MCF 10A (cell line): ENCODE measurements at regions of chr1 and their contacts with region 1.

Region 1: GRCh38 chr1:205061665-205062069 is 18.7 kb downstream of the CNTN2 start:
- DNase-seq: peak; percentile 85
- H3K4me3 Mint-ChIP-seq: no peak overlapping the region
- H3K27ac Mint-ChIP-seq: no peak overlapping the region
- H3K4me1 Mint-ChIP-seq: no peaks in the 10 kb centered on the region
- H3K27me3 Mint-ChIP-seq: peaks cover 21% of the 10 kb centered on the region
- CTCF ChIP-seq: peak; percentile 99

Region 2: DNA sequence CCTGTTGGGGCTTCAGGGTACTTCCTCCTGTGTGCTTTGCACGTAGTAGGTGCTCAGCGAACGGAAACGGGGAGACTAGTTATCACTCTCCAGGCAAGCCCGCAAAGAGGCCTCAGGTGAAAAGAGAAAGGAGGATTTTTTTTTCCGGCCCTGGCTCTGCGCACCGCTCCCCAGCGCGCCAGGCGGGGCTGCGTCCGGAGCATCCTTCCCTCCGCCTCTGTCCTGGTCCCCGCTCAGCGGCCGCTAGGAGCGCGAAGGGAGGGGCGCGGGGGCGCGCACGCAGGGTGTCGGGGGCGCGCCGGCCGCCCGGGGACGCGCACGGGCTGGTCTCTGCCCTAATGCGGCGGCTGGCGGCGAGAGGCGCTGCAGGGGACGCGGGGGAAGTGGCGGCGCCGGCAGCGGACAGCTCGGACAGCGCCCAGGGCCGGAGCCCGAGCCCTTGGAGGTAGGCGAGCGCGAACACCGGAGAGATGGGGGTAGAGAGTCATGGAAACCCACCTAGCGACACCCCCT is 233.3 kb before region 1 on chr1:
- CTCF ChIA-PET with region 1: interaction called, 11 read pairs
- POLR2A ChIA-PET with region 1: no interaction called
- intact Hi-C with region 1: no loop called
- DNase-seq: no peak
- H3K4me3 Mint-ChIP-seq: no peak overlapping the region
- H3K27ac Mint-ChIP-seq: no peak overlapping the region
- H3K4me1 Mint-ChIP-seq: no peaks in the 10 kb centered on the region
- H3K27me3 Mint-ChIP-seq: peaks cover 79% of the 10 kb centered on the region
- CTCF ChIP-seq: no peak

Region 3: GRCh38 chr1:204975570-204976235 is 86.0 kb before region 1 on chr1:
- CTCF ChIA-PET with region 1: interaction called, 272 read pairs
- POLR2A ChIA-PET with region 1: interaction called, 4 read pairs
- intact Hi-C with region 1: loop called (anchors 1 kb)
- DNase-seq: peak; percentile 78
- H3K4me3 Mint-ChIP-seq: no peak overlapping the region
- H3K27ac Mint-ChIP-seq: no peak overlapping the region
- H3K4me1 Mint-ChIP-seq: peaks cover 8% of the 10 kb centered on the region
- H3K27me3 Mint-ChIP-seq: peaks cover 58% of the 10 kb centered on the region
- CTCF ChIP-seq: peak; percentile 99

Region 4: DNA sequence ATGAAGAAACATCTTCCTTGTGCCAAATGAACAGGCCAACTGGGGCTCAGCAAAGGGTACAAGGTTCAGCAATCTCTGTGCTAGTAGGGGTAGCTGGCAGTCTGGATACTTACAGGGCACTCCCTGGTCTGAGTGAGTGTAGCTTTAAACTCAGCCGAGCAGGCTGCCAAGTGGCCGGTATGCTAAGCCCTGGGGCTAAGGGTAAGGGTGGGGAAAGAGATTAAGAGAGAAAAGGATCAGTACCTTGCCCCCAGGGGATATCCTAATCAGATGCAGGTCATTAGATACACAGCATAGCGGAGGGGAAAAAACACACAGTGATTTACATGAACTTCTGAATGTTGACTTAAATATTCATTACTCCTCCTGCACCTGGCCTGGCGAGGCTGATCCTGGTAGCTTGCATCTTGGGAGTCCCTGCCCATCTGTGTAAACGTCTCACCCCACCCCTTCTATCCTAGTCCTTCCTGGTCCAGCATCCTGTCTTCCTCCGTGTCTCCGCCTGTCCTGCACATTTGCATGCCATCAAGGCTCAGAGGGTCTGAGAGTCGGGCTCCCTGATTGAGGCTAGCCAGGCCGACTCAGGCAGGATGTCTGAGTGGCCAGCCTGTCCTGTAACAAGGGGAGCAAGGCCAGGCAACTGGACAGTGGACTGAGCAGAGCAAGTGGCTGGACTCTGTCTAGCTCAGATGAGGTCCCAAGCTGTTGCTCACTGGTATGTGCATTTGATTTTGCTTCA is 58.1 kb before region 1 on chr1:
- CTCF ChIA-PET with region 1: interaction called, 42 read pairs
- POLR2A ChIA-PET with region 1: no interaction called
- intact Hi-C with region 1: no loop called
- DNase-seq: no peak
- H3K4me3 Mint-ChIP-seq: no peak overlapping the region
- H3K27ac Mint-ChIP-seq: no peak overlapping the region
- H3K4me1 Mint-ChIP-seq: no peaks in the 10 kb centered on the region
- H3K27me3 Mint-ChIP-seq: peaks cover 66% of the 10 kb centered on the region
- CTCF ChIP-seq: no peak

Region 5: GRCh38 chr1:205032508-205032907 is 29.2 kb before region 1 on chr1:
- CTCF ChIA-PET with region 1: interaction called, 72 read pairs
- POLR2A ChIA-PET with region 1: no interaction called
- intact Hi-C with region 1: no loop called
- DNase-seq: no peak
- H3K4me3 Mint-ChIP-seq: no peak overlapping the region
- H3K27ac Mint-ChIP-seq: no peak overlapping the region
- H3K4me1 Mint-ChIP-seq: no peaks in the 10 kb centered on the region
- H3K27me3 Mint-ChIP-seq: peaks cover 85% of the 10 kb centered on the region
- CTCF ChIP-seq: no peak

Region 6: DNA sequence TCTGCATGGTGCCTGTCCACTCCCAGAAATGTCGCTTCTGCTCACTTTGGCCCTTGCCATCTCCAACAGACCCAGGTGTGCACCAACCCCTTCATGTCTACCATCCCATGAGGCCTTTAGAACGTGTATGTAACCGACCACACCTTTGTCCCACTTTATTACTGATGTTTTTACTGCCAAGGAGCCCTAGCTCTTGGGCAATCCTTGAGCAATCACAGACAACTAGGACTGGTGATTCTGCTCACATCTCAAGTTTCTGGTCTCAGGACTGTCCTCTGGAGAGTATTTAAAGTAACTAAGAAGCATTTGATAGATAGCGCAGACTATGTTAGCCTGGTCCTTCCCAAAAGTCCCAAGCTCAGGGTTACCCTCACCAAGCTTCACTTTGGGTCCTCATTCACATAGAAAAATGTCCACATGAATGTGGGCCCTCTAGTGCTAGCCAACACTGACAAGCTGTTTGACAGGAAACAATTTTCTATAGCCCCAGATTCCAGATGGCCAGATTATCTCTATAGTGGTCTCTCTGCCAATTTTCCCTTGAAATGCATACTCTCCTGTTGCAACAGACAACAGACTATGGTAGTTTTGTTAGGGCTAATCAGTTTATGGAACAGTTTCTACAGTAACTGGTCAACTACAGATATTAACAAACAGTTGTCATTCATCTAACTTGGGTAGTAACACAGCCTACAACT is 29.5 kb after region 1 on chr1:
- CTCF ChIA-PET with region 1: interaction called, 79 read pairs
- POLR2A ChIA-PET with region 1: no interaction called
- intact Hi-C with region 1: no loop called
- DNase-seq: peak; percentile 75
- H3K4me3 Mint-ChIP-seq: no peak overlapping the region
- H3K27ac Mint-ChIP-seq: peak overlapping the region; percentile 40
- H3K4me1 Mint-ChIP-seq: peaks cover 15% of the 10 kb centered on the region
- H3K27me3 Mint-ChIP-seq: no peaks in the 10 kb centered on the region
- CTCF ChIP-seq: no peak

Region 7: GRCh38 chr1:205141236-205142101 is 79.8 kb after region 1 on chr1:
- CTCF ChIA-PET with region 1: interaction called, 40 read pairs
- POLR2A ChIA-PET with region 1: no interaction called
- intact Hi-C with region 1: no loop called
- DNase-seq: peak; percentile 91
- H3K4me3 Mint-ChIP-seq: no peak overlapping the region
- H3K27ac Mint-ChIP-seq: no peak overlapping the region
- H3K4me1 Mint-ChIP-seq: peaks cover 19% of the 10 kb centered on the region
- H3K27me3 Mint-ChIP-seq: no peaks in the 10 kb centered on the region
- CTCF ChIP-seq: peak; percentile 82